ENCODE measurements at regions of chr20 and their contacts with region 1.

Region 1: GRCh38 chr20:23441850-23442313 is 2.4 kb downstream of the CSTL1 start:
- DNase-seq: no peak
- H3K4me3 ChIP-seq: no peak overlapping the region
- CTCF ChIP-seq: peak; percentile 88

Region 2: GRCh38 chr20:23350196-23350903 is 91.5 kb before region 1 on chr20 and contains the start of gene NXT1:
- CTCF ChIA-PET with region 1: interaction called, 10 read pairs
- POLR2A ChIA-PET with region 1: no interaction called
- DNase-seq: peak; percentile 95
- H3K4me3 ChIP-seq: peak within 1 kb of the TSS; percentile 86
- CTCF ChIP-seq: peak; percentile 4

Region 3: GRCh38 chr20:23404196-23404595 is 37.7 kb before region 1 on chr20:
- CTCF ChIA-PET with region 1: interaction called, 15 read pairs
- POLR2A ChIA-PET with region 1: no interaction called
- DNase-seq: no peak
- H3K4me3 ChIP-seq: no peak overlapping the region
- CTCF ChIP-seq: no peak

Region 4: DNA sequence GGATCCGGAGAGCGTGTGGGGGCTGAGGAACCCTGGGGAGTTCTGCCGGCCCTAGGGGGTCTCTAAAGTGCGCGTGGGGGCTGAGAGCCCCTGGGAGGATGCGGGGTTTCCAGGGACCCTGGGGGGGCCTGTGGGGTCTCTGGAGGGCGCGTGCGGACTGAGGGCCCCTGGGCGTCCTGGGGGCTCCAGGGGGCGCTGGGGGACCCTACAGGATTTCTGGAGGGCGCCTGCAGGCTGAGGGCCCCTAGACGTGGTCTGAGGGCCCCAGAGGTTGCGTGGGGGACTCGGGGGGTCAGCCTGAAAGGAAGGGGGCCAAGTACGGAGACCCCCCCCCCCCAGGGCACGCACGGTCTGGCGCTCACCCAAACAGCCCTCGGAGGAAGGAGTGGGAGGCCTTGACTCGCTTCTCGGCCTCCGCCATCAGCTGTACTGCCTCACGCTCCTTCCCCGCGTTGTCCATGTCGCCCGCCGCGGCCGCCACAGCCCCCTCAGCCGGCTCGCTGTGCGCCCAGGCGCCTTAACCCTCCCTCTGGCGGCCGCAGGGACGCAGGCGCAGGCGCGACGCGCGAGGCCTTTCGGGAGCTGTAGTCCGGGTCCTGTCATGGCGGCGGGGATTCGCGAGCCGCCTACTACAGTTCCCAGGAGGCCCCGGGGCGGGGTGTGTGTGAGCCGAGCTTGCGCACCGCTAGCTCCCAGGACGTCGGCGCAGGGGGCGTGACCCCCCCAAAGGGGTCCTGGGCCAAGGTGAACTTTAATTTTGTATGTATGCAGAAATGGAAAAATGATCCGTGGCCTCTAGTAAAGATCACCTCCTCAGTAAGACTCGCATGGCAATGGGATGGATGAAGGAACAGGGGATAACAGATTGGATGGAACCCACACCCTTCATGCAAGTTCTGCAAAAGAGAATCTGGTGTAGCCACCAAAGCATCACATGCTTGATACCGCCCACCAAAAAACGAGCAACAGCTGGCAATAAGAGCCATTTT is 20.6 kb before region 1 on chr20 and contains the start of gene NAPB:
- CTCF ChIA-PET with region 1: interaction called, 43 read pairs
- POLR2A ChIA-PET with region 1: no interaction called
- DNase-seq: no peak
- H3K4me3 ChIP-seq: peak within 1 kb of the TSS; percentile 90
- CTCF ChIP-seq: peak; percentile 67

Region 5: GRCh38 chr20:23530937-23531567 is 89.2 kb after region 1 on chr20:
- CTCF ChIA-PET with region 1: no interaction called
- POLR2A ChIA-PET with region 1: no interaction called
- DNase-seq: no peak
- H3K4me3 ChIP-seq: no peak overlapping the region
- CTCF ChIP-seq: no peak

Region 6: GRCh38 chr20:23606652-23607049 is 164.8 kb after region 1 on chr20:
- CTCF ChIA-PET with region 1: interaction called, 195 read pairs
- POLR2A ChIA-PET with region 1: interaction called, 3 read pairs
- DNase-seq: peak; percentile 12
- H3K4me3 ChIP-seq: no peak overlapping the region
- CTCF ChIP-seq: peak; percentile 97

Measured in AG04449 (cell line).